ENCODE measurements at regions of chr10 and their contacts with region 1.

Region 1: GRCh38 chr10:119750391-119751230 is 24.8 kb downstream of the INPP5F start:
- DNase-seq: peak; percentile 14 to 59 (median 44)
- ATAC-seq: peak; percentile 99
- H3K4me3 ChIP-seq: no peak overlapping the region
- H3K4me3 Mint-ChIP-seq: peak overlapping the region in 1 of 10 donors; percentile 9
- H3K27ac ChIP-seq: no peak overlapping the region
- H3K27ac Mint-ChIP-seq: peak overlapping the region in 2 of 9 donors; percentile 1 to 11
- H3K4me1 ChIP-seq: no peaks in the 10 kb centered on the region
- H3K4me1 Mint-ChIP-seq: peaks cover 5 to 18% (median 12%) of the 10 kb centered on the region in 7 donors
- H3K27me3 ChIP-seq: no peaks in the 10 kb centered on the region
- H3K27me3 Mint-ChIP-seq: no peaks in the 10 kb centered on the region

Region 2: GRCh38 chr10:119625570-119626280 is 124.9 kb before region 1 on chr10:
- CTCF ChIA-PET with region 1: no interaction called
- POLR2A ChIA-PET with region 1: no interaction called
- intact Hi-C with region 1: no loop called
- DNase-seq: no peak
- ATAC-seq: no peak
- H3K4me3 ChIP-seq: no peak overlapping the region
- H3K4me3 Mint-ChIP-seq: no peak overlapping the region
- H3K27ac ChIP-seq: no peak overlapping the region
- H3K27ac Mint-ChIP-seq: no peak overlapping the region
- H3K4me1 ChIP-seq: no peaks in the 10 kb centered on the region
- H3K4me1 Mint-ChIP-seq: peaks cover 0 to 5% (median 0%) of the 10 kb centered on the region in 7 donors
- H3K27me3 ChIP-seq: no peaks in the 10 kb centered on the region
- H3K27me3 Mint-ChIP-seq: no peaks in the 10 kb centered on the region

Region 3: DNA sequence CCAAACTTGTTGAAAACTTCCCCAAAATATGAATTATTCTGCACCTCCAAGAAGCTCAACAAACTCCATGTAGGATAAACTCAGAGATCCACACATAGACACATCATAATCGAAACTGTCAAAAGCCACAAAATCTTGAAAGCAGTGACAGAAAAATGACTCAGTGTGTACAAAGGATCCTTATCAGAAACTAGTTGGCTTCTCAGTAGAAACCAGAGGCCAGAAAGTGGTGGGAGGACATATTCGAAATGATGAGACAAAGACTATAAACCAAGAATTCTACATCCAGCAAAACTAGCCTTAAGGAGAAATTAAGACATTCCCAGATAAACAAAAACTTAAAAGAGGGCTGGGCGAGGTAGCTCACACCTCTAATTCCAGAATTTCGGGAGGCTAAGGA is 83.6 kb after region 1 on chr10:
- CTCF ChIA-PET with region 1: no interaction called
- POLR2A ChIA-PET with region 1: no interaction called
- intact Hi-C with region 1: loop called in 1 of 2 experiments (anchors 1 kb)
- DNase-seq: no peak
- ATAC-seq: no peak
- H3K4me3 ChIP-seq: no peak overlapping the region
- H3K4me3 Mint-ChIP-seq: peak overlapping the region in 1 of 10 donors; percentile 47
- H3K27ac ChIP-seq: no peak overlapping the region
- H3K27ac Mint-ChIP-seq: peak overlapping the region; percentile 22 to 85 (median 78)
- H3K4me1 ChIP-seq: no peaks in the 10 kb centered on the region
- H3K4me1 Mint-ChIP-seq: peaks cover 0 to 18% (median 8%) of the 10 kb centered on the region in 7 donors
- H3K27me3 ChIP-seq: no peaks in the 10 kb centered on the region
- H3K27me3 Mint-ChIP-seq: no peaks in the 10 kb centered on the region

Region 4: DNA sequence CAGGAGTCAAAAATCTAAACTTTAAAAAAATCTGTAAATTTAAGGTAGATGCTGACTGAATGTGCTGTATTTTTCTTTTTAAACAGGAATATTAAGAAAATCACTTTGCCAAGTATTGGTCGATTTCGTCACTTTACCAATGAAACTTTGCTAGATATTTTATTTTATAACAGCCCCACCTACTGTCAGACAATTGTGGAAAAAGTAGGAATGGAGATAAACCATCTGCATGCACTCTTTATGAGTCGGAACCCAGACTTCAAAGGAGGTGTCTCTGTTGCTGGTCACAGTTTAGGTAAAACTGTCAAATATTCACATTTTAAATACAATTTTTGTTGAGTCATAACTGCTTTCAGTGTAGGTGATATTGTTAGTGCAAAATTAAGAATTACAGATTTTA is 167.1 kb after region 1 on chr10:
- CTCF ChIA-PET with region 1: no interaction called
- POLR2A ChIA-PET with region 1: no interaction called
- intact Hi-C with region 1: loop called in 1 of 2 experiments (anchors 1 kb)
- DNase-seq: no peak
- ATAC-seq: no peak
- H3K4me3 ChIP-seq: no peak overlapping the region
- H3K4me3 Mint-ChIP-seq: no peak overlapping the region
- H3K27ac ChIP-seq: no peak overlapping the region
- H3K27ac Mint-ChIP-seq: no peak overlapping the region
- H3K4me1 ChIP-seq: no peaks in the 10 kb centered on the region
- H3K4me1 Mint-ChIP-seq: peaks cover 0 to 23% (median 5%) of the 10 kb centered on the region in 7 donors
- H3K27me3 ChIP-seq: no peaks in the 10 kb centered on the region
- H3K27me3 Mint-ChIP-seq: no peaks in the 10 kb centered on the region